Endothelial cell of umbilical vein (primary cell): ENCODE measurements at regions of chr1 and their contacts with region 1.

Region 1: GRCh38 chr1:43554444-43554992 is 23.8 kb downstream of the PTPRF start:
- DNase-seq: no peak
- H3K4me3 ChIP-seq: no peak overlapping the region
- H3K27ac ChIP-seq: no peak overlapping the region
- H3K4me1 ChIP-seq: peaks cover 4% of the 10 kb centered on the region
- H3K27me3 ChIP-seq: no peaks in the 10 kb centered on the region
- CTCF ChIP-seq: peak; percentile 48 to 61
- POLR2A ChIP-seq: no peak

Region 2: GRCh38 chr1:42822800-42823392 is 731.6 kb before region 1 on chr1:
- CTCF ChIA-PET with region 1: no interaction called
- POLR2A ChIA-PET with region 1: no interaction called
- dilution Hi-C with region 1: no loop called
- intact Hi-C with region 1: no loop called
- DNase-seq: no peak
- H3K4me3 ChIP-seq: no peak overlapping the region
- H3K27ac ChIP-seq: no peak overlapping the region
- H3K4me1 ChIP-seq: peaks cover under 1% of the 10 kb centered on the region
- H3K27me3 ChIP-seq: no peaks in the 10 kb centered on the region
- CTCF ChIP-seq: no peak
- POLR2A ChIP-seq: no peak

Region 3: GRCh38 chr1:43473463-43473862 is 81.1 kb before region 1 on chr1:
- CTCF ChIA-PET with region 1: no interaction called
- POLR2A ChIA-PET with region 1: no interaction called
- dilution Hi-C with region 1: no loop called
- intact Hi-C with region 1: no loop called
- DNase-seq: peak; percentile 46
- H3K4me3 ChIP-seq: peak overlapping the region in 1 of 3 experiments; percentile 53
- H3K27ac ChIP-seq: peak overlapping the region; percentile 100
- H3K4me1 ChIP-seq: peaks cover 60% of the 10 kb centered on the region
- H3K27me3 ChIP-seq: no peaks in the 10 kb centered on the region
- CTCF ChIP-seq: no peak
- POLR2A ChIP-seq: no peak

Region 4: DNA sequence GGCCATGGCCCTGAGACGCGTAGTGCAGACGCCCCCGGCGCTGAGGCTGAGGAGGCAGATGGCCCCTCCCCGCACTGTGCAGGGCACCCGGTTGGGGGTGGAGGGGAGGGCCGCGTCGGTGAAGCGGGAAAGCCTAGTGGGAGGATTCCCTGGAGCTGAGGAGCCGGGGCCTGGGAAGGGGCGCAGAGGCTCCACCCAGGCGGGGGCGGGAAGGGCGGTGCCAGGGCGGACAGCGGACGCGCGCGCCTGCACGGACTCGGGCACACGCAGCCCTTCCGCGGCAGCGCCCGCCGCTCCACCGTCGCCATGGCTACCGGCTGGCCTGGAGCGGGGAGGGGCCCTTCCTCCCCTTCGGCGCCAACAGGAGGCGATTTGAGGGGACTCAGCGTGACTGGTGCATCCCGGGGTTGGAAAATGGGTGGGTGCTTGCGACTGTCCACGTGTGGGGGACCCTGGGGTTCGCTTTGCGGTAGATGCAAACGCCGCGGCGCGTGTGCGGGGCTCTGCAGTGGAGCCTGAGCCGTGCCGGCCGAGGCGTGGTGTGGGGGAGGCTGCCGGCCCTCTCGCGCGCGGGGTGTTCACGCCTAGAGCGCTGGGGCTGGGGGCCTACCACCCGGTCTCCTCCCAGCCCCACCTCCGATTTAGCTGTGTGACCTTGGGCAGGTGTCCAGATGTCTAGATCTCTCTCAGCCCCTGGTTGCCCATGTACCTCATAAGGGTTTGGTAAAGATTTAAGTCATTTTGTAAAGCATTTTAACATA is 11.3 kb after region 1 on chr1:
- CTCF ChIA-PET with region 1: interaction called, 10 read pairs
- POLR2A ChIA-PET with region 1: no interaction called
- dilution Hi-C with region 1: no loop called
- intact Hi-C with region 1: no loop called
- DNase-seq: peak; percentile 29
- H3K4me3 ChIP-seq: peak overlapping the region in 1 of 3 experiments; percentile 26
- H3K27ac ChIP-seq: no peak overlapping the region
- H3K4me1 ChIP-seq: peaks cover 12% of the 10 kb centered on the region
- H3K27me3 ChIP-seq: no peaks in the 10 kb centered on the region
- CTCF ChIP-seq: no peak
- POLR2A ChIP-seq: no peak

Region 5: DNA sequence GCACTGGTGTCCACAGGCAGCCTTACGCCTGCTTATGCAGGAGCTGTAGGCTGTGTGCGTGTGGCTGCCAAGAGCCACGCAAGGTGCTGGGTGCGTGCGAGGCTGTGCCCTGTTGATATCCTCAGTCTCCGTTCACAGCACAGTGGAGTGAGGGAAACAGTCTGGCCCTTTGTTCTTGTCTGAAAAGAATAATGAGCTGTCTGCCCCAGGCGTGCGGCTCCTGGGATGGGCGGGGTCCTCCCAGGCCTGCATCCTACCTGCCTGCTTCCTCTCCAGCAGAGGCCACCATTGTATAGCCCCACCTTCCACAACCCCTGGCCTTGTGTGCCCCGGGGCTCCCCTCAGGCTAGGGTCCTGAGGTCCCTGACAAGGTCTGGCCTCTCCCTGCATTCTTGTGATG is 48.5 kb after region 1 on chr1:
- CTCF ChIA-PET with region 1: no interaction called
- POLR2A ChIA-PET with region 1: no interaction called
- dilution Hi-C with region 1: no loop called
- intact Hi-C with region 1: no loop called
- DNase-seq: no peak
- H3K4me3 ChIP-seq: no peak overlapping the region
- H3K27ac ChIP-seq: no peak overlapping the region
- H3K4me1 ChIP-seq: no peaks in the 10 kb centered on the region
- H3K27me3 ChIP-seq: no peaks in the 10 kb centered on the region
- CTCF ChIP-seq: no peak
- POLR2A ChIP-seq: no peak